ENCODE measurements at regions of chr4 and their contacts with region 1.

Region 1: GRCh38 chr4:4803912-4804296 is 55.6 kb upstream of the MSX1 start:
- DNase-seq: no peak
- ATAC-seq: no peak
- H3K4me3 ChIP-seq: no peak overlapping the region
- H3K27ac ChIP-seq: no peak overlapping the region
- H3K4me1 ChIP-seq: no peaks in the 10 kb centered on the region
- H3K27me3 ChIP-seq: no peaks in the 10 kb centered on the region
- CTCF ChIP-seq: no peak
- EP300 ChIP-seq: no peak
- POLR2A ChIP-seq: no peak
- RAD21 ChIP-seq: no peak

Region 2: DNA sequence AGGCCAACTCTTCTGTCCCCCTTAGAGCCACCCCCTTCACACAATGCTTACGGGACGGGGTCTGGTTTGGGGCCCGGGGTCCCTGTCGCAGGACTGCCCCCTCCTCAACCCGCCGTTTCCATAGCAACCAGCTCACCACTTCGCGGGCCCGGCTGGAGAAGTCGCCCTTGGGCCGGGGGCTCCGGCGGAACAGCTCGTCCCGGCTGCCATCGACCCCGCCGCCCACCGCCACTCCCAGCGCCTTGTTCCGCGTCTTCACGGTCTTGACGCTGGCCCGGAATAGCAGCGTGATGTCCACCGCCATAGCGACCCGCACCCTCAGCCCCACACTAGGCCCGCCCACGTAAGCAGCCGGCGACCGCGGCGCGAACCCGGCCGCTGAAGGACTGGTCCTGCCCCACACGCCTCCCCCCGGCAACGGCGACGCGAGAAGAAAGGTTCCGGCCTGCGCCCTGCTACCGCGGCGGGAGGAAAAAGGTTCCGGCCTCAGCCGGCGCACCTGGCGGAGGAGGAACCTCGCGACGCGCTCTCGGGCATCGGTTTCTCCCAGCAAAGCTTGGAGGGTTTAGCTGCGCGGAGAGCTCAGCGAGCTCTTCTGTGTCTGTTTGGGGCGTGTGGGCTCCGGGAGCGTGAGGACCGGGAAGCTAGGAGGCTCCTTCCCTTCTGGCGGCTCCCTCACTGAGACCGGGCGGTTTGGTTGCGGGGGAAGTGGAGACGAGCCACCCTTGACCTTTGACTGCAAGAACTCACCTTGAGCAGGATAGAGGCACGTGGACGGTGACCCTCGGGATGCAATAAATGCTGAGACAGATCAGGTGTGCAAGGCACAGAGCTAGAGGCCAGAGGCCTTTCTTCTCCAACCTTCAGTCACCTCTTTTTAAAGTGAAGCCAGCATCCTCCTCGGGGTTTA is 262.0 kb before region 1 on chr4 and contains the start of gene STX18:
- CTCF ChIA-PET with region 1: no interaction called
- POLR2A ChIA-PET with region 1: no interaction called
- RAD21 ChIA-PET with region 1: no interaction called
- SMC1A ChIA-PET with region 1: no interaction called
- in situ Hi-C with region 1: no loop called
- intact Hi-C with region 1: no loop called
- DNase-seq: peak; percentile 48
- ATAC-seq: peak; percentile 92
- H3K4me3 ChIP-seq: peak within 1 kb of the TSS; percentile 80
- H3K27ac ChIP-seq: peak within 1 kb of the TSS; percentile 92
- H3K4me1 ChIP-seq: 0 out of 2 replicates have a peak, but pooled peaks cover 2% of the 10 kb centered on the region
- H3K27me3 ChIP-seq: no peaks in the 10 kb centered on the region
- CTCF ChIP-seq: no peak
- EP300 ChIP-seq: peak; percentile 43 to 45; a peak in 1 of 4 replicates
- POLR2A ChIP-seq: peak; percentile 96
- RAD21 ChIP-seq: 0 out of 2 replicates have a peak, but pooled peaks have one; percentile 13
- polyA plus RNA-seq, gene STX18: 8.2 to 13.6 TPM

Region 3: GRCh38 chr4:4791299-4792111 is 12.4 kb before region 1 on chr4:
- CTCF ChIA-PET with region 1: no interaction called
- POLR2A ChIA-PET with region 1: no interaction called
- RAD21 ChIA-PET with region 1: no interaction called
- SMC1A ChIA-PET with region 1: no interaction called
- in situ Hi-C with region 1: no loop called
- intact Hi-C with region 1: loop called (anchors 1 kb)
- DNase-seq: no peak
- ATAC-seq: no peak
- H3K4me3 ChIP-seq: no peak overlapping the region
- H3K27ac ChIP-seq: no peak overlapping the region
- H3K4me1 ChIP-seq: no peaks in the 10 kb centered on the region
- H3K27me3 ChIP-seq: no peaks in the 10 kb centered on the region
- CTCF ChIP-seq: no peak
- EP300 ChIP-seq: no peak
- POLR2A ChIP-seq: no peak
- RAD21 ChIP-seq: no peak

Measured in GM12878 (cell line).